Heart right ventricle (tissue), 16 donors: ENCODE measurements at regions of chr5 and their contacts with region 1.

Region 1: DNA sequence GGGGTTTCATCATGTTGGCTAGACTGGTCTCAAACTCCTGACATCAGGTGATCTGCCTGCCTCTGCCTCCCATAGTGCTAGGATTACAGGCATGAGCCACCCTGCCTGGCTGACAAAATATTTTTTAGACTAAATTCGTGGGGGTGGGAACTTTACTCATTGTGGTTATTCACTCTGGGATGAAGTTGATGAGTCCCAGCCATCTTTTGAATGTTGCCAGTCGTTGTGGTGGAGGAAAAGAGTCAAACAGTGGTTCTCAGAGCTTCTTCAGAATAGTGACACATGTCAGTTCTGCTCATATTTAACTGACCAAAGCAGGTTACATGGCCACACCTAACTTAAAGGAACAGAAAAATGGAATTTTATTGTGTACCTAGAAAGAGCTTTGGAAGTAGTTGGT is 6.9 kb downstream of the SREK1 start:
- DNase-seq: no peak
- ATAC-seq: peak in 1 of 8 donors; percentile 9
- H3K4me3 ChIP-seq: no peak overlapping the region
- H3K27ac ChIP-seq: no peak overlapping the region
- H3K4me1 ChIP-seq: peaks cover 0 to 63% (median 32%) of the 10 kb centered on the region in 9 donors
- H3K27me3 ChIP-seq: no peaks in the 10 kb centered on the region
- CTCF ChIP-seq: no peak

Region 2: DNA sequence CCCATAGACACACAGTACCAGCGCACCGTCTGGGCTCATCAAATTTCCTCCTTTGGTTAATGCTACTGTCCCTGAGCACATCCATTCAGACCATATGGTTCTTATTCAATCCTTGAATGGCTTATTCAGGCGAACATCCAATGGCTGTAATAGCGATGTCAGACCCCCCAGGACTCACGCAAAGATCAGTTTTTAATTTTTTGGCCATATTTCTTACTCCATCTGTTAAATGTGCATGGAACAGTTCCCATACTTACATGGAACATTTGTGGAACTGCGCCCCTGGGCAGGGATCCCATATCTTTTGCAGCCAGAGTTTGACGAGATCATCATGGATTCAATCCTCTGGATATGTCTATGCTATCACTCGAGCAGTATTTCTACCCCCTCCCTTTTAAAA is 882.5 kb before region 1 on chr5:
- intact Hi-C with region 1: no loop called
- DNase-seq: no peak
- ATAC-seq: peak in 5 of 8 donors; percentile 17 to 65 (median 37)
- H3K4me3 ChIP-seq: no peak overlapping the region
- H3K27ac ChIP-seq: no peak overlapping the region
- H3K4me1 ChIP-seq: no peaks in the 10 kb centered on the region
- H3K27me3 ChIP-seq: no peaks in the 10 kb centered on the region
- CTCF ChIP-seq: no peak

Region 3: DNA sequence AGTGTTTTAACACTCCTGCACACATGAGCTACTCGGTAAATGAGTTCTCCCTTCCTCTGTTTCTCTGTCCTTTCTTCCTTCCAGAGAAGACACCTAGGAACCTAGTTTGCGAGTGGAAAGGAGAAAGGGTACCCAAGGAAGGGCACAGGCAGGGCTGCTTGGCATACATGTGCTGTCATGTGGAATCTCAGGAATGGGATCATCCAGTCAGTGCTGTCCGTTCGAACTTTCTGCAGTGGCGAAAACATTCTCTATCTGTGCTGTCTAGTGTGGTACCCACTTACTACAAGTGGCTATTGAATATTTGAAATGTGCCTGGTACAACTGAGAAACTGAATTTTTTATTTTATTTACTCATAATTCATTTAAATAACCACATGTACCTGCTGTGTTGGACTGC is 401.1 kb before region 1 on chr5:
- intact Hi-C with region 1: loop called in 1 of 10 experiments (anchors 10 kb)
- DNase-seq: no peak
- ATAC-seq: no peak
- H3K4me3 ChIP-seq: no peak overlapping the region
- H3K27ac ChIP-seq: no peak overlapping the region
- H3K4me1 ChIP-seq: peaks cover 0 to 9% (median 0%) of the 10 kb centered on the region in 9 donors
- H3K27me3 ChIP-seq: no peaks in the 10 kb centered on the region
- CTCF ChIP-seq: no peak

Region 4: GRCh38 chr5:66015196-66015960 is 135.7 kb before region 1 on chr5:
- intact Hi-C with region 1: no loop called
- DNase-seq: no peak
- ATAC-seq: no peak
- H3K4me3 ChIP-seq: no peak overlapping the region
- H3K27ac ChIP-seq: no peak overlapping the region
- H3K4me1 ChIP-seq: peaks cover 0 to 12% (median 0%) of the 10 kb centered on the region in 9 donors
- H3K27me3 ChIP-seq: no peaks in the 10 kb centered on the region
- CTCF ChIP-seq: no peak

Region 5: DNA sequence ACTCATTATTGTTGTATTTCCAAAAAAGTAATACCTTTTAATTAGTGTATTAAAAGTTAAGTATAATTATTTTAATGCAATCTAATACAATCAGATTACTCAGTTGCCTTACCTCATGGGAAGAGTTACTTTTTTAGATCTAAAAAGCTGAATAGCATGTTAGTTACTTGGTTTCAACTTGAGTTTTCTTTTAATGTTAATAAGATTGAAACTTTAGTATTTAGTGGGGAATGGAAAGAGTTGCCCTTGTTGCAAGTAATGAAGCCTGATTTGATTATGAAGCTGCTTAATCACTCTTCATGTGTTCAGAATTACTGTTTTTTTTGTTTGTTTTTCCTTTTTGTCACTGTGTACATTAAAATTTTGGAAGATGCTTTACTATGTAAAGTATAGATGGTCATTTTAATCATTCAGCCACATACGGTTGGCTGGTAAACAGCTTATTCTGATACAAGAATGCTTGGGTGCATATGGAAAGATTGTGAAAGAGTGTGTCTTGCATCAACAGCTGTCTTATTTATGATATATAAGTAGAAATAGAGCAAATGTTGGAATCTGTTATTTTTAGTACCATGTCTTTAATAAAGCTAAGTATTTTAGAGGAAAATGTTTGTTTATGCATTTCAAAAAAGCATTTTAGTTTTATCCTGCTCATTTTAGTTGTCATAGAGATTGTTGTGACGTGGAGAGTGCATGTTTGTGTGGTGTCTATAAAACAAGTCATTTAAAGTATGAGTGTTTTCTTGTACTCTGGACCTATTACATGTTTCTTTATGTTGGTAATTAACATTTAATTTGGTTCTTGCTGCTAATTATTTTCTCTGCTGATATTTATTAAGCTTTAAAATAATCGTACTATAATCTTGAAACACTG is 29.5 kb after region 1 on chr5:
- intact Hi-C with region 1: no loop called
- DNase-seq: no peak
- ATAC-seq: no peak
- H3K4me3 ChIP-seq: no peak overlapping the region
- H3K27ac ChIP-seq: no peak overlapping the region
- H3K4me1 ChIP-seq: peaks cover 0 to 6% (median 0%) of the 10 kb centered on the region in 9 donors
- H3K27me3 ChIP-seq: no peaks in the 10 kb centered on the region
- CTCF ChIP-seq: no peak